Heart left ventricle (tissue), 16 donors: ENCODE measurements at regions of chr22 and their contacts with region 1.

Region 1: DNA sequence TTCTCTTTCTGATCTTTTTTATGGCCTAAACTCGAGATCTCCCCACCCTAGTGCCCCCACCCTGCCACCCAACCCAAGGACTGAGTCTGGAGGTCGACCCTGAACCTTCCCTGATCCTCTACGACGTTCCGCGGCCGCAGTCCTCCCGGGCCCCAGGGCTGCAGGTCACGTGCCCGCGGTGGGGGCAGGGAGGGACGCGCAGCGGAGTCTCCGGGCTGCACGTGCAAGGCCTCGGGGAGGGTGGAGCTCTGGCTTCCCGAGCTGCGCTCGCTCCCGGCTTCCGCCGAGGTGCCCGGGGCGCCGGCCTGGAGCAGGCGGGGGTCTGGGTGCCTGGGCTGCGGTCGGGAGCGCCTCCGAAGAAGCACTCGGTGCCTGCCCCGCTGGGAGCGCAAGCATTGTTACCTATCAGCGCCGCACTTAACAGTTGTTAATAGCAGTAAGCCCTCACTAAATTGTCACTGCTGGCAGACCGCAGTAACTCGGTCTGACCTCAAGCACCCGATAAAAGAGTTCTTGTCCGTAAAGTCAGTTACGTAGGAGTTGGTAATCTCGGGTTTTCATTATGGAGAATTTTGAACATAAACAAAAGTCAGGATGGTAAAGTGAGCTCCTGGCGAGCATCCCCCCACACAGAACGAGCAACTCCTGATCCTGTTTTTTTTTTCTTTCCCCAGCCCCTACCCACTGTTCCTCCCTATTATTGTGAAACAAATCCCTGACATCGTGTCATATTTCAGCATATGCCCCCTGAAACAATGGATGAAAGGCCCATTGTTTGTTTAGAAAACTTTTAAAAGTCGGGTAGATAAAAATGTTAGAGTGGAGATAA is 69.7 kb upstream of the EP300 start:
- DNase-seq: peak; percentile 93 to 97 (median 95)
- ATAC-seq: peak; percentile 87 to 97 (median 96)
- H3K4me3 ChIP-seq: peak overlapping the region; percentile 53 to 93 (median 80)
- H3K27ac ChIP-seq: peak overlapping the region; percentile 90 to 99 (median 97)
- H3K4me1 ChIP-seq: peaks cover 0 to 25% (median 10%) of the 10 kb centered on the region in 12 donors
- H3K27me3 ChIP-seq: no peaks in the 10 kb centered on the region
- CTCF ChIP-seq: no peak
- POLR2A ChIP-seq: peak in 1 of 2 donors; percentile 51

Region 2: DNA sequence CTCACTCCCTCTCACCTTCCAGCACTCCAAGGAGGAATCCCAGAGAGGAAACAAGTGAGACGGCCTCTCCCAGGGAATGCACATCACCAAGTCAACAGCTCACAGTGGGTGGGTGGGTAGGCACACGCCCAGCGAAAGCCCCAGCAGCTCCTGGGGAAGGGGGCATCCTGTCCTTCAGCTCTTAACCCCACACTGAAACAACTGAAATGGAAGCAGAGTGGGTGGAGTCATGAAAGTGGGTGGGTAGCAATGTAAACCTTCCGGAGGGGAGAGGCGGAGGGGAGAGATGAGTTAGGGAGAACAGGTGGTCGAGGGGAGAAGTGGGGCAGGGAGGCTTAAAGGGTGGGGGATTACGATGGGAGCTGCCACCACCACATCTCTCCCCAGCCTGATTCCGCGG is 338.0 kb before region 1 on chr22:
- intact Hi-C with region 1: no loop called
- DNase-seq: no peak
- ATAC-seq: no peak
- H3K4me3 ChIP-seq: no peak overlapping the region
- H3K27ac ChIP-seq: no peak overlapping the region
- H3K4me1 ChIP-seq: peaks cover 0 to 21% (median 6%) of the 10 kb centered on the region in 12 donors
- H3K27me3 ChIP-seq: no peaks in the 10 kb centered on the region
- CTCF ChIP-seq: no peak
- POLR2A ChIP-seq: no peak

Region 3: DNA sequence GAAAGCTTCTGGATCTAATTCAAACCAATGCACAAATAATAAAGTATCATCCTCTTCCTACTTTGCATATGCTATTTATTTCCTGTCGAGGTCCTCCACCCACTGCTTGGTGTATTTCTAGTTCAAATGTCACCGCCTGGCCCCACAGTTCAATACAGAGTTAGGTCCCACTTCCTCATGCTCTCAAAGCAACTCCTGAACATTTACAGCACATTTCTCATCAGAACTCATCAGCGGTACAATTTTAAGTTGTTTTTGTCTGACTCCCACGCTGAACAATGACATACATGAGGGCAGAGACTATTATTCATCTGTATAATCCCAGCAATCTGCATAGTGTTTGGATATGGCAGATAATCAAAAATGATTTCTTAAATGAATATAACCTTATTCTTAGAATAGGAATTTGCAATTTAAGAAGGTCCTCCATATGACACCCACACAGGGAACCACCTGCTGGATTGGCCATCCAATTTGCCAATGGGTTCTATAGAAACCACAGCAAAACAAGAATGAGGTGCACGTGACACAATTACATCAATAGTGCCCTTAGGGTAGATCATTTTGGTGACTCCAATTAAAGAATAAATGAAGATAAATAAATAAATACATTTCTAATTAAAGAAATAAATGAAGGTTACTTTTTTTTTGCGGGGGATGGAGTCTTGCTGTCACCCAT is 257.8 kb before region 1 on chr22:
- intact Hi-C with region 1: no loop called
- DNase-seq: no peak
- ATAC-seq: no peak
- H3K4me3 ChIP-seq: no peak overlapping the region
- H3K27ac ChIP-seq: no peak overlapping the region
- H3K4me1 ChIP-seq: no peaks in the 10 kb centered on the region
- H3K27me3 ChIP-seq: no peaks in the 10 kb centered on the region
- CTCF ChIP-seq: no peak
- POLR2A ChIP-seq: no peak

Region 4: DNA sequence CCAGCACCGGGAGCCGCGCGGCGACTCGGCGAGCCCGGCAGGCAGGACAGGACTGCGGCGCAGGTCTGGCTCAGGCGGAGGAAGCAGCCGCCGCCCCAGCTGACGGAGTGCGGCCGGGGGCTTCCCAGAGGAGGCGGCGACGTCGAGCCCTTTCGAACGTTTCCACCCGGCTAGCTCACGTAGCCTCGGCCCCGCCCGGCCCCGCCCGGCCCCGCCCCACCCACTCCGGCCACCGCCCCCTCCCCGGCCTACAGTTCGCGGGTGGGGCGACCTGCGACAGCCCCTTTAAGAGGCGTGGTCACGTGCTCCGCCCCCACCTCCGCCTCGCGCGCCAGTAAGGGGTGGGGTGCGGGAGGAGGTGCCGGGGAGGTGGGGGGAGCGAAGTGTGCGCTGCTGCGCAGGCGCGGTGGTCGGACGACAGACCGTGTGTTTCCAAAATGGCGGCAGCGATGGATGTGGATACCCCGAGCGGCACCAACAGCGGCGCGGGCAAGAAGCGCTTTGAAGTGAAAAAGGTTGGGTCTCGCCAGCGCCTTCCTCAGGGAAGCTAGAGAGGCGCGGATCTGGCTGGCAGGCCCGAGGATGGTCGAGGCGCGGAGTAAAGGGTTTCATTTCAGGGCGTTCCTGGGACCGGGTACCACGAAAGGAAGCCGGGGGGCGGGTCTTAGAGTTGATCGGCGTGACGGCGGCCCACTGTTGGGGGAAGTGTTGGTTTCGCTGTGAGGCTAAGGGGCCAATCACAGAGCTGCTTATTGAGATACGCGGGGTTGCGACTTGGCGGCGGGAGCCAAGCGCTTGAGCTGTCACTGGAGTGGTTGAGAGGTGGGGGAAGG is 71.5 kb before region 1 on chr22 and contains the start of gene RBX1:
- intact Hi-C with region 1: loop called in 7 of 10 experiments (anchors 2 to 5 kb)
- DNase-seq: peak; percentile 98 to 99 (median 99)
- ATAC-seq: peak; percentile 95 to 97 (median 96)
- H3K4me3 ChIP-seq: peak within 1 kb of the TSS; percentile 56 to 96 (median 84)
- H3K27ac ChIP-seq: peak within 1 kb of the TSS; percentile 81 to 99 (median 95)
- H3K4me1 ChIP-seq: peaks cover 0 to 37% (median 25%) of the 10 kb centered on the region in 12 donors
- H3K27me3 ChIP-seq: no peaks in the 10 kb centered on the region
- CTCF ChIP-seq: no peak
- POLR2A ChIP-seq: peak; percentile 42 to 80
- total RNA-seq, gene RBX1: 44.1 to 76.2 (median 59.9) TPM

Region 5: GRCh38 chr22:40990430-40990829 is 32.3 kb before region 1 on chr22:
- intact Hi-C with region 1: no loop called
- DNase-seq: no peak
- ATAC-seq: no peak
- H3K4me3 ChIP-seq: no peak overlapping the region
- H3K27ac ChIP-seq: no peak overlapping the region
- H3K4me1 ChIP-seq: no peaks in the 10 kb centered on the region
- H3K27me3 ChIP-seq: peaks cover 0 to 14% (median 2%) of the 10 kb centered on the region in 9 donors
- CTCF ChIP-seq: no peak
- POLR2A ChIP-seq: no peak

Region 6: DNA sequence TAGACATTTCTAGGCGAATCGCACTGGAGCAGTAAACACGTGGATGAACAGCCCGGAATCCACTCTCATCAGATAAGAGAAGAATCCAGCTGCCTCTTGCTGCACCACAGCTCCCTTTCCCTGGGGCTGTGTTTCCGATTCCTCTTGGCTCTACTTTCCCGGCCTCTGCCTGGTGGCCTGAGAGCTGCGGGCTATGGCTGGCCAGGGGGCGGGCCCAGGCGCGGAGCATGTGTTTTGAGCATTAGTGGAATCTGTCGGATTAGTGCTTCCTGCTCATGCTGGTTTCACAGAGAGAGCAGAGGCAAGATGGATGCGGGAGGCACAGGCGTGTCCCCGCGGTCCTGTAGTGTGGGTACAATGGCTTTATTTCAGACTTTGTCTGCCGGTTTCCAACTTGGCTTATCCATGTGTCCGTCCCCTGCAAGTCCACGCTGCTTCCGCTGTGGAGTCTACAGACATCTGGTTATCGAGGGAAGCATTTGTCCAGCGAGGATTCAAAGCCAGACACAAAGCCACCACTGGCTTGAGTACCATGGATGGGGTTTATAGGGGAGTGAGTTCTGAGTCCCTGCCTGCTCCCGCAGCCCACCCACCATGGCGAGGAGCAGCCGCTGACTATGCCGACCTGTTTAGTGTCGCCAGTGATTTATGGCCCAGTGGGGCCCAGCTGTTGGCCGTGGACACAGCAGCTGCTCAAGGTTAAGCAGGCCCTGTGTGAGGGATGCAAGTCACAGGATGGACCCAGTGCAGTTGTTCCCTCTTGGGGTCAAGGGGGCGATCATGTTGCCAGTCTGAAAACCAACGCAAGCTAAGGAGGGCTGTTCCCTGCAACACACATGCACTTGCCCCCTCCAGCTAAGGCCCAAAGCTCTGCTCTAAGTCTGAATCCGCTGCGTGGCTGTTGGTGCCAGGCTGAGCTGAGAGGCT is 26.4 kb after region 1 on chr22:
- intact Hi-C with region 1: loop called in 2 of 10 experiments (anchors 2 kb)
- DNase-seq: peak; percentile 75 to 83 (median 77)
- ATAC-seq: peak; percentile 88 to 98 (median 94)
- H3K4me3 ChIP-seq: peak overlapping the region in 9 of 12 donors; percentile 25 to 48 (median 35)
- H3K27ac ChIP-seq: peak overlapping the region; percentile 23 to 76 (median 62)
- H3K4me1 ChIP-seq: peaks cover 0 to 23% (median 10%) of the 10 kb centered on the region in 12 donors
- H3K27me3 ChIP-seq: no peaks in the 10 kb centered on the region
- CTCF ChIP-seq: no peak
- POLR2A ChIP-seq: no peak

Region 7: DNA sequence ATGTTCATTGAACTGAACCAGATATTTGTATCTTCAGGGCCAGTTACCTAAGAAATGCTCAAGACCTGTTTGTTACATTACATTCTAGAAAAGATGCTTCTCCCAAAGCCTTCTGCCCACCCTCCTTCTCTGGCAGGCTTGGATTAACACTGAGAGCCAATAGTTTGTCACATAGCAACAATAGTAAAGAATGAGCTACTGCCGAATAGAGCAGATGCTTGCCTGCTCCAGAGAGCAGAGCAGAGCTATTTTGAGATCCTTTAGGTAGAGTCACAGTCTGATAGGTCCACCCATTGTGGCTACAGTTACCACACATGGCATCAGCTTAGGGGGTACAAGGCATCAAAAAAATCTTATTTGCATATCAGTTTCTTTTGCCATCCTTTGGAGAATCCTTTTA is 56.2 kb after region 1 on chr22:
- intact Hi-C with region 1: no loop called
- DNase-seq: no peak
- ATAC-seq: peak; percentile 43 to 73 (median 62)
- H3K4me3 ChIP-seq: no peak overlapping the region
- H3K27ac ChIP-seq: no peak overlapping the region
- H3K4me1 ChIP-seq: no peaks in the 10 kb centered on the region
- H3K27me3 ChIP-seq: no peaks in the 10 kb centered on the region
- CTCF ChIP-seq: no peak
- POLR2A ChIP-seq: no peak

Region 8: DNA sequence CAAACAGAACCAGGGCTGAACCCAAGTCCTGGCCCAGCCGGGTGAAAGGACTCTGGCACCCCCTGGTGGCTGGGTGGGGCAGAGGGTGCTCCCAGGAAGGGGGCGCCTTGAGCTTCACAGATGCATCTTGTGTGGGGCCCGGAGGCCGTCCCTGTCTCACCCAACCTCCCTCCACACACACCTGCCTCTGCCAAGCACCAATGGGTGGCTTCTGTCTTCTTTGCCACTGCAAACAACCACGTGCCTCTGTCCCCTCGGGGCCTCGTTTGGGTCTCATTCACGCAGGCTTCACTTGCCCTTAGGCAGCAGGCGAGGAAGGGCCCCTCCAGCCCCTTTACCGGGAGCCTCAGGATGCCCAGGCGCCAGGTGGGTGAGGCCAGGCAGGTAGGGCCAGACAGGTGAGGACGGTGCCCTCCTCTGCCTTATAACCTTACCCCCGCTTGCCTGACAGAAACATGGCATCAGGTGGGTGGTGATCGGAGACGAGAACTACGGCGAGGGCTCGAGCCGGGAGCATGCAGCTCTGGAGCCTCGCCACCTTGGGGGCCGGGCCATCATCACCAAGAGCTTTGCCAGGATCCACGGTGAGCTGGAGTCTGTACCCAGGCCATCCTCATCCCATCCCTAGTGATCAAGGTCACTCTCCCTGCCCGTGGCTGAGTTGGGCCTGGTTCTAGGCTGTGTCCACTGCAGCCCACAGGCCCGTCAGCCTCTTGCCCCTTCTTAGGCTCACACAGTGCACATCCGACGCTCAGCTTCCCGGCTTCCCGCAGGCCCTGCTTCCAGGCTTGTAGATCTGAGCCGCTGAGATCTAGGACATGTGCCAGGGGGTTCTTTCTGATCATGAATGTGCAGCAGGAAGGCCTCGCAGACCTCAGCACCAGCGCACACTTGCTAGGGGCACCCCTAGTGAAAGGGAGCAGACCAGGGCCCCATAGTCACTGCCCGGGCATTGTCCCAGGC is 504.4 kb after region 1 on chr22:
- intact Hi-C with region 1: loop called in 1 of 10 experiments (anchors 10 kb)
- DNase-seq: peak in 1 of 5 donors; percentile 50
- ATAC-seq: peak in 1 of 4 donors; percentile 22
- H3K4me3 ChIP-seq: no peak overlapping the region
- H3K27ac ChIP-seq: peak overlapping the region in 10 of 12 donors; percentile 77 to 93 (median 89)
- H3K4me1 ChIP-seq: peaks cover 7 to 66% (median 46%) of the 10 kb centered on the region in 12 donors
- H3K27me3 ChIP-seq: no peaks in the 10 kb centered on the region
- CTCF ChIP-seq: peak; percentile 73 to 86 (median 79)
- POLR2A ChIP-seq: no peak